Common myeloid progenitor, CD34-positive (primary cell): ENCODE measurements at regions of chr11 and their contacts with region 1.

Region 1: DNA sequence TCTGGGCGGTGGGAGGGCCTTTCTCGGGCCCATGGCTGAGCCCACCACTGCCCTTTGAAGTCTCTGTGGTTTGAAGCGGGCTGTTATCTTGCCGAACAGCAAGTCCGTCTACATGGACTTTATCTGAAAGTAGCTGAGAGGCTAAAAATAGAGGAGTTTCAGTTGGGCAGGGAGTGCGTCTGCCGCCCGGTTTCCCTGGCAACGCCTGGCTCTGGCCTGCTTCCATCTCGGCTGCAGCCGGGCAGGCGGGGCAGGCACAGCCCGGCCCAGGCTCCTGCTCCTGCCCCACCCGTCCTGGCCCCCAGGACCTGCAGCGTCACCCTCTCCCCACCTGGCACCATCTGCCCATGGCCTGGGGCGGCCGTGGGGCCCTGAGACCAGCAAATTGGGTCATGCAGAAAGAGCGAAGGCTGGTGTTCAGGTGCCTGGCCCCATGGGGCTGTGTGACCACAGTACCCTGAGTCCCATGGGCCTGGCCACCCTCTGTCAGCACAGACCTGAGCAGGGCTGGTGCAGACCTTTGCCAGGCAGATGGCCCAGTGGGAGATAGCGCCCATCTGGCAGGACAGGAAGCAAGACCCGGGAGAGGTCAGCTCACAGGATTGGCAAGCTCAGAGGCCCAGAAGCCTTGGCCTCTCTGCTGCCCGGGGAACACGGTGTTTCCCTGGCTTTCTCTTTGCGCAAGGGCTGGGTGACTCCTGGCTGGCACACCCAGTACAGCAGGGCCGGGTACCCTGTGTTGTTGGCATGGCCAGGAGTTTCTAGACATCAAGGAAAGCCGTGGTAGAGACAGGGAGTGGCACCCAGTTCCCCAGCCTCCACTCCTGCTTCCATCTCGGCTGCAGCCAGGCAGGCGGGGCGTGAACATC is 79.1 kb upstream of the KCNQ1OT1 start:
- DNase-seq: peak; percentile 91 to 98 (median 97)
- H3K4me3 ChIP-seq: peak overlapping the region in 4 of 7 experiments; percentile 19 to 35 (median 33)
- H3K27ac ChIP-seq: peak overlapping the region; percentile 85 to 93
- H3K4me1 ChIP-seq: peaks cover 5 to 94% (median 77%) of the 10 kb centered on the region in 4 experiments
- H3K27me3 ChIP-seq: no peaks in the 10 kb centered on the region

Region 2: GRCh38 chr11:2802389-2803211 is 23.7 kb after region 1 on chr11:
- CTCF ChIA-PET with region 1: no interaction called
- POLR2A ChIA-PET with region 1: no interaction called
- DNase-seq: no peak
- H3K4me3 ChIP-seq: no peak overlapping the region
- H3K27ac ChIP-seq: no peak overlapping the region
- H3K4me1 ChIP-seq: peaks cover 0 to under 1% (median 0%) of the 10 kb centered on the region in 4 experiments
- H3K27me3 ChIP-seq: no peaks in the 10 kb centered on the region

Region 3: DNA sequence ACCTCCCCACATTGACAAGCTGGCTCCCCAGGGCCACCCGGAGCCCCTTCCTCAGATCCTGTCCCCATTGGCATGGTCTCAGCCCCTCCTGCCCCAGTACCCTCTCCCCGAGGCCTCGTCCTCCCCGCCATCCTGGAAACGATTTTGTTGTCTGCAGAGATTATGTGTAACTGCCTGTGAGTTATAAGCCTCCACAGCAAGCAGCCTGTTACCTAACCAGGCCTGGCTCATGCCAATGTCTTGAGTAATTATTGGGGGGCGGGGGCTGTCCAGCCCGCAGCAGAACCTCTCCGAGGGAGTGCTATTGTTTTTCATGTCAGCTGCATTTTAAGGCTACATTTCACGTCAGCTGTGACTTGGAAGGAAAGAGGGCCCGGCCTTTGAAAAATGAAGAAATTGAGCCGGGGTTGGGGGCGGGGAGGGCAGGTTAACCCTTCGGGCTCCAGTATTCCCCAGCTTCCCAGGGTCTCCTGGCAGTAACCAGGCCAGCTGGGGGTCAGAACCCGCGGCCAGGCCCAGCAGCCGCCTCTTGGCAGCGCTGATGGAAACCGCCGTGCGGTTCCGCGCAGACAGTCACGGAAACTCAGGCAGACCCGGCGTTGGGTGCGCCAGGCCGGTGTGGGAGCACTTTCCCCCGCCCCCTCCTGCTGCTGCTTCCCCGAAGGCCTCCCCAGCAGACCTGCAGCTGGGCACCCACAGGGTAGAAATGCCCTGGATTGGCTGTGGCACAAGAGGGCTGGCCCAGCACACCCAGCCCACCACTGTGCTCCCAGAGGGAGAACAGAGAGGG is 47.2 kb after region 1 on chr11:
- CTCF ChIA-PET with region 1: interaction called, 4 read pairs
- POLR2A ChIA-PET with region 1: interaction called, 11 read pairs
- DNase-seq: peak; percentile 85 to 93 (median 89)
- H3K4me3 ChIP-seq: peak overlapping the region in 4 of 7 experiments; percentile 1 to 26 (median 16)
- H3K27ac ChIP-seq: peak overlapping the region; percentile 20 to 67
- H3K4me1 ChIP-seq: peaks cover 0 to 51% (median 48%) of the 10 kb centered on the region in 4 experiments
- H3K27me3 ChIP-seq: no peaks in the 10 kb centered on the region

Region 4: DNA sequence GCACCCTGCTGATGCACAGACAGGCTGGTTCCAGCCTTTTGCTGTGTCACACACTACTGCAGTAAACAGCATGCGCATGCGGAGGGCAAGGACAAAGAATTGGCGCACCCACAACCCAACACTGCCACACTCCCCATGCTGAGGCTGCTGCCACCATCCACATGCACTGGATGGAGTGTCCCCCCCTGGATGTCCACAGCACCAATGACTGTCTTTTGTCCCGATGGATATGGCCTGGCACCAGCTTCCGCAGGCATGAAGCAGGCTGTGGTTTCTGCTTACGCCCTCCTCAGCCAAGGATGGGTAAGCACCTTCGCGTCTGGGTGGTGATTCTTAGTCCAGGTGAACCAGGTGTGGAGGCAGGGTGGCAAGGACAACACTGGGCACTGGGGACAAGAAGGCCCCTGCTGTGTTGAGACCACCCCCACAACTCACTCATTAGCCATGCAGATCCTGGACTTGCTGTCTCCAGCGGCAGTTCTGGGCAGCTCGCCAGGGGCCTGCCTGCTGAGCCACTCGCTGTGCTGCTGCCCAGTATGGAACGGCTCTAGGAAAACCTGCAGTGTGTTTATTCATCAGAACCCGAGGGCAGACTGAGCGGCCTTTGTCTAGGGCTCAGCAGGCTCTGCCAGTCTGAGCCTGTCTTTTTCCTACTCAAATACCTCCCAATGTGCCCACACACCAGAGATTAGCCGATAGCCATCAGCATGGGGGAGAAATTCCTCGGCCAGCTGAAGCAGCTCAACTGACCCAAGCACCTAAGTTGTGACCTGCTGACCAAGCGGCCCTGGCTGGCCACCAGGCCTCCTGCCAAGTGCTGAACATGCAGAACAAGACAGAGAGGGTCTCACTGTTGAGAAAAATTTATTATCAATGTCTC is 221.5 kb after region 1 on chr11:
- CTCF ChIA-PET with region 1: no interaction called
- POLR2A ChIA-PET with region 1: no interaction called
- DNase-seq: no peak
- H3K4me3 ChIP-seq: no peak overlapping the region
- H3K27ac ChIP-seq: no peak overlapping the region
- H3K4me1 ChIP-seq: peaks cover 0 to 4% (median 0%) of the 10 kb centered on the region in 4 experiments
- H3K27me3 ChIP-seq: no peaks in the 10 kb centered on the region